Activated T-helper 2 cell treated with anti-CD3 and anti-CD28 coated beads, Interferon-gamma antibody, Interleukin-2, Interleukin-4, amounts not matched to agents 10 μg/mL and 5 μg/mL and 100 μg/mL, durations not matched to agents 14 hours and 24 hours and 36 hours (primary cell): ENCODE measurements at regions of chr1 and their contacts with region 1.

Region 1: DNA sequence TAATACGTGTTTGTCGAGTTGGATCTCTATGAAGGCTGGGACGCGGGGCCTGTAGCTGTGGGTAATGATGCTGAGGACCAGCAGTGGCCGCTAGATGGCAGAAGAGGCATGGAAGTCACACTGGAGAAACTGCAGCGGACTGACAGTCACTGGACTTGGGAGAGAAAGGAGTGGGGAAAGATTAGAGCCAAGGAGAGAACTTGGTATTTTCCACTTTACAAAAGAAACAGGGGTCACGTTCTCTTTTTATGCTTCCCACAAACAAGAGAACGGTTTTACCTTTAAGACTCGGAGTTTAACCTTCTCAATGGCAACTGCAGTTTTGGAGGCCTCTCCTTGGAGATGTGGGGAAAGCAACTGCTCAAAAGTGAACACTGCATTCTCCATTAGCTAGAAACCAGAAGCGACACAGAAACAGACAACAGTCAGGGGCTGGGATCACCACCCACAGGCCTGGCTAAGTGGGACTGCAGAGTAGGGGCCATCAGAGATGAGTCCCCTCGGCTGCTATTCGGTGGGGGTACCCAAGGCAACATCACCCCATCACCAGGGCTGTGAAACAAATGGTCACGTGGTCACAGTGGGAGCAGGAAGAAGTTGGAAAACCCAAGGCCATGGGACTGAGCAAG is 51.1 kb upstream of the EDEM3 start:
- DNase-seq: peak; percentile 64
- H3K4me3 Mint-ChIP-seq: no peak overlapping the region
- H3K27ac Mint-ChIP-seq: peak overlapping the region; percentile 31
- H3K4me1 Mint-ChIP-seq: peaks cover 2% of the 10 kb centered on the region
- H3K27me3 Mint-ChIP-seq: no peaks in the 10 kb centered on the region

Region 2: DNA sequence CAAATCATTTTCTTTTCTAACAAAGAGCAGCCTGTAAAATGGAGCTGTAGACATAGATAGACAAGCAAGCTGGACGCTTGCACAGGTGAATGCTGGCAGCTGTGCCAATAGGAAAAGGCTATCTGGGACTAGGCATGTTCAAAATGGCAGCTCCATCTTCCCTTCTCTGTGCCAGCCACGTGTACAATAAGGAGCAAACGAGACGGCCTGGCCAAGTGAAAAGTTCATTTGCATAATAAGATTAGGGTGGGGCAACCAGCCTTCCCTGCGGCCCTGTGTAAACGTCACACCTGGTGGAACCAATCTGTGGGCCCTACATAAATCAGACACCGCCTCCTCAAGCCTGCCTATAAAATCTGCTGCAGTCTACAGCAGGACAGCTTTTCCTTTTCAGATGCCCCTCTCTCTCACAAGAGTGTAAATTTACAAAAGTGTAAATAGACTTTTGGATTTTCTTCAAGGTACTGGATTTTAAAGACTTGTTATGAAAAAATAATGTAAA is 34.5 kb before region 1 on chr1:
- intact Hi-C with region 1: no loop called
- DNase-seq: no peak
- H3K4me3 Mint-ChIP-seq: no peak overlapping the region
- H3K27ac Mint-ChIP-seq: no peak overlapping the region
- H3K4me1 Mint-ChIP-seq: no peaks in the 10 kb centered on the region
- H3K27me3 Mint-ChIP-seq: peaks cover 22% of the 10 kb centered on the region

Region 3: GRCh38 chr1:184881941-184882913 is 76.4 kb after region 1 on chr1:
- intact Hi-C with region 1: loop called (anchors 2 kb)
- DNase-seq: no peak
- H3K4me3 Mint-ChIP-seq: peak overlapping the region; percentile 1
- H3K27ac Mint-ChIP-seq: peak overlapping the region; percentile 90
- H3K4me1 Mint-ChIP-seq: peaks cover 31% of the 10 kb centered on the region
- H3K27me3 Mint-ChIP-seq: peaks cover 5% of the 10 kb centered on the region

Region 4: GRCh38 chr1:184982002-184982954 is 176.5 kb after region 1 on chr1:
- intact Hi-C with region 1: loop called (anchors 1 kb)
- DNase-seq: peak; percentile 60
- H3K4me3 Mint-ChIP-seq: no peak overlapping the region
- H3K27ac Mint-ChIP-seq: no peak overlapping the region
- H3K4me1 Mint-ChIP-seq: peaks cover 11% of the 10 kb centered on the region
- H3K27me3 Mint-ChIP-seq: peaks cover 46% of the 10 kb centered on the region